ENCODE measurements at regions of chr7 and their contacts with region 1.

Region 1: GRCh38 chr7:36084475-36085097 is 68.5 kb upstream of the EEPD1 start:
- DNase-seq: peak in 1 of 2 experiments; percentile 16
- H3K4me3 ChIP-seq: no peak overlapping the region
- H3K27ac ChIP-seq: no peak overlapping the region
- H3K4me1 ChIP-seq: peaks cover 11% of the 10 kb centered on the region
- H3K27me3 ChIP-seq: no peaks in the 10 kb centered on the region
- CTCF ChIP-seq: no peak; the same call in 1 of the 2 replicates

Region 2: GRCh38 chr7:35647171-35647574 is 437.4 kb before region 1 on chr7:
- CTCF ChIA-PET with region 1: no interaction called
- POLR2A ChIA-PET with region 1: interaction called, 17 read pairs
- intact Hi-C with region 1: no loop called
- DNase-seq: no peak
- H3K4me3 ChIP-seq: no peak overlapping the region
- H3K27ac ChIP-seq: no peak overlapping the region
- H3K4me1 ChIP-seq: no peaks in the 10 kb centered on the region
- H3K27me3 ChIP-seq: no peaks in the 10 kb centered on the region
- CTCF ChIP-seq: no peak

Region 3: GRCh38 chr7:36280840-36281812 is 196.5 kb after region 1 on chr7:
- CTCF ChIA-PET with region 1: interaction called, 11 read pairs
- POLR2A ChIA-PET with region 1: no interaction called
- intact Hi-C with region 1: no loop called
- DNase-seq: peak; percentile 68 to 92
- H3K4me3 ChIP-seq: peak overlapping the region; percentile 50
- H3K27ac ChIP-seq: peak overlapping the region; percentile 67
- H3K4me1 ChIP-seq: peaks cover 73% of the 10 kb centered on the region
- H3K27me3 ChIP-seq: no peaks in the 10 kb centered on the region
- CTCF ChIP-seq: no peak